Activated CD8-positive, alpha-beta T cell treated with anti-CD3 and anti-CD28 coated beads for 36 hours (primary cell): ENCODE measurements at regions of chr15 and their contacts with region 1.

Region 1: GRCh38 chr15:34223904-34224596 is 766 bp upstream of the EMC4 start:
- DNase-seq: no peak
- ATAC-seq: peak; percentile 2
- H3K4me3 Mint-ChIP-seq: peak overlapping the region; percentile 95
- H3K27ac Mint-ChIP-seq: peak overlapping the region; percentile 90
- H3K4me1 Mint-ChIP-seq: peaks cover 18% of the 10 kb centered on the region
- H3K27me3 Mint-ChIP-seq: peaks cover 1% of the 10 kb centered on the region
- CTCF ChIP-seq: no peak

Region 2: GRCh38 chr15:34101366-34102175 is 122.5 kb before region 1 on chr15 and contains the starts of genes EMC7 and PGBD4:
- CTCF ChIA-PET with region 1: no interaction called
- POLR2A ChIA-PET with region 1: interaction called, 4 read pairs
- intact Hi-C with region 1: loop called (anchors 5 kb)
- DNase-seq: peak; percentile 99
- ATAC-seq: peak; percentile 99
- H3K4me3 Mint-ChIP-seq: peak within 1 kb of the TSS; percentile 100
- H3K27ac Mint-ChIP-seq: peak within 1 kb of the TSS; percentile 99
- H3K4me1 Mint-ChIP-seq: peaks cover 25% of the 10 kb centered on the region
- H3K27me3 Mint-ChIP-seq: no peaks in the 10 kb centered on the region
- CTCF ChIP-seq: no peak
- total RNA-seq, gene EMC7: 45.0 to 49.9 TPM
- total RNA-seq, gene PGBD4: 2.6 to 2.7 TPM

Region 3: DNA sequence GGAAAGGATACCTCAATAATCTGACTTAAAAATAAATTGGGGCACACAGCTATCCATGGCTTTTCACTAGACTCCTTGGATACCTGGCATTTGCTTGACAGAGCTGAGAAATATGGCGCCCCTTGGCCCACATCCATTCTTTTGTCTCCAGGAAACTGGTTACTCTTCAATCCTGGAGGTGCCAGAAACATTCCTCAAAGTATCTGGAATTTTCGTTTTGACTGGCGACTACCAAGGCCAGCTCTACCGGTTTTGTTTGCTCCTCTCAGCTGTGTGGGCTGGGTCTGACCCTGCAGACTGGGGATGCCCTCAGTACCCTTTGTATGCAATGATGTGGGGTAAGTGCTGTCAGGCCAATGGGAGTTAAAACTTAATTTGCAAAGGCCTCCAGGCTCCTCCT is 41.1 kb before region 1 on chr15:
- CTCF ChIA-PET with region 1: no interaction called
- POLR2A ChIA-PET with region 1: no interaction called
- intact Hi-C with region 1: no loop called
- DNase-seq: no peak
- ATAC-seq: no peak
- H3K4me3 Mint-ChIP-seq: no peak overlapping the region
- H3K27ac Mint-ChIP-seq: no peak overlapping the region
- H3K4me1 Mint-ChIP-seq: peaks cover 3% of the 10 kb centered on the region
- H3K27me3 Mint-ChIP-seq: no peaks in the 10 kb centered on the region
- CTCF ChIP-seq: no peak